ENCODE measurements at regions of chr2 and their contacts with region 1.

Region 1: DNA sequence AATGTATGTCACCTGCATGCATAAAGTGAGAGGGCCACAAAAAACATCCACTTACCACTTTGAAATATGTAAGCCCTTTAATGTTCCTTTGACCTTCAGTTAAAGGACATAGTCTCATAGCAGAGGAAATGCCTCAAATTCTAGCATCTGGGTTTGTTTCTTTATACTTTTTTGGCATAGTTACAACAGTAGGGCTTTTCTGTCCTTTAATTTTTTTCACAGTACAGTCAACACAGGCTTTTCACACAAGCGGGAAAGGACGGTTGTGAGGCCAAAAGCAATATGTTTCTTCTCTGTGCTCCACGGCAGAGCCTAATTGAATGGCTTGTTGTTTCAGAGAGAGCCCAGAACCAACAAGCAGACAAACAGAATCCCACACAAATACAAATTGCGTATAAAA is 57.6 kb downstream of the CRIM1 start:
- DNase-seq: peak; percentile 88
- H3K4me3 ChIP-seq: peak overlapping the region in 1 of 3 experiments; percentile 8
- H3K27ac ChIP-seq: peak overlapping the region; percentile 92
- H3K4me1 ChIP-seq: peaks cover 88% of the 10 kb centered on the region
- H3K27me3 ChIP-seq: no peaks in the 10 kb centered on the region
- CTCF ChIP-seq: no peak
- POLR2A ChIP-seq: peak; percentile 78

Region 2: GRCh38 chr2:36367895-36368353 is 45.3 kb before region 1 on chr2:
- CTCF ChIA-PET with region 1: interaction called, 12 read pairs
- POLR2A ChIA-PET with region 1: interaction called, 4 read pairs
- dilution Hi-C with region 1: no loop called
- intact Hi-C with region 1: loop called (anchors 1 kb)
- DNase-seq: peak; percentile 45
- H3K4me3 ChIP-seq: peak overlapping the region in 1 of 3 experiments; percentile 1
- H3K27ac ChIP-seq: peak overlapping the region; percentile 31
- H3K4me1 ChIP-seq: peaks cover 98% of the 10 kb centered on the region
- H3K27me3 ChIP-seq: no peaks in the 10 kb centered on the region
- CTCF ChIP-seq: no peak
- POLR2A ChIP-seq: no peak

Region 3: DNA sequence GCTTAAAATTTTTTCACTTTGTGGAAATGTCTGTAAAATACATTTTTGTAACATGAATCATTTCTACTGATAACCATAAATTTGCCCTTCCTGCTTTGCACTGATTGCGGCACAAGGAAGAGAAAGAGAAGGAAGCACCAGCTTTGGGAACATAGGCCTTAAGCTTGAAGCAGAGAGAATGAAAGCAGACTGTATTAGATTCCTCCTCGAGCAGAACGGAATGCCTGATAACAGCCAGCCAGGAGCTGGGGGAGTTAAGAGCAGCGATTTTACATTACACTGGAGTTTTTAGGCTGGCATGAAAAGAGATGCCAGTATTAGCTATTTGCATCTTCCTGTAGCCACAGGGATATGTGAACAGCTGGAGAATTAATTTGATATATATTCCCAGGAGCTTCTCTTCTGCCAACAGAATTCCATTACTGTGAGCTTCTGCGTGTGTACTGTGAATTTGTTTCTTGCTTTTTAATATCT is 24.1 kb before region 1 on chr2:
- CTCF ChIA-PET with region 1: interaction called, 17 read pairs
- POLR2A ChIA-PET with region 1: interaction called, 7 read pairs
- dilution Hi-C with region 1: no loop called
- intact Hi-C with region 1: loop called (anchors 1 kb)
- DNase-seq: peak; percentile 87
- H3K4me3 ChIP-seq: no peak overlapping the region
- H3K27ac ChIP-seq: peak overlapping the region; percentile 98
- H3K4me1 ChIP-seq: peaks cover 87% of the 10 kb centered on the region
- H3K27me3 ChIP-seq: no peaks in the 10 kb centered on the region
- CTCF ChIP-seq: no peak
- POLR2A ChIP-seq: no peak

Region 4: GRCh38 chr2:36433311-36434217 is 20.3 kb after region 1 on chr2:
- CTCF ChIA-PET with region 1: interaction called, 10 read pairs
- POLR2A ChIA-PET with region 1: interaction called, 3 read pairs
- dilution Hi-C with region 1: no loop called
- intact Hi-C with region 1: loop called (anchors 2 kb)
- DNase-seq: no peak
- H3K4me3 ChIP-seq: no peak overlapping the region
- H3K27ac ChIP-seq: no peak overlapping the region
- H3K4me1 ChIP-seq: peaks cover 89% of the 10 kb centered on the region
- H3K27me3 ChIP-seq: no peaks in the 10 kb centered on the region
- CTCF ChIP-seq: no peak
- POLR2A ChIP-seq: peak; percentile 4

Region 5: DNA sequence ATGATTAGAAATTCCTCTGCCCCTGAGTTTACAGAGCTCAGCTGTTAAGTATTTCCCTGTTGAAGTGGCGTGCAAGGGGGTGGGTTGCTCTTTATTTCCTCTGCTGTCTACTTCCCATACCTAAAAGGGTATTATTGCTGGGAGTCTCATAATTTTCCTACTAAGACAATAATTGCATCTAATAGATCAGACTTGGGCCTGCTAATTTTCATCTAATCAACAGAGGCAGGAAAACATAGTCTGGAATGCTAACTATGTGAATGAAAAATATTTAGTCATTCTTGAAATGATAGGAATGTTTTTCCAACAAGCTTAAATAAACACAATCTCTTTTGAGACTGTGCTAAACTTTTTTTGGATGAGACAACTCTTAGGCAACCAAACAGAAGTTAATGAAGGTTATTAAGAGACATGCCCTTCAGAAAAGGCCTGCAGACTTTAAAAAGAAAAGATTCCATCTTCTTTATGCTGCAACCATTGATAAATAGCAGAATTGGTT is 73.4 kb after region 1 on chr2:
- CTCF ChIA-PET with region 1: no interaction called
- POLR2A ChIA-PET with region 1: interaction called, 3 read pairs
- dilution Hi-C with region 1: no loop called
- intact Hi-C with region 1: loop called (anchors 1 kb)
- DNase-seq: peak; percentile 90
- H3K4me3 ChIP-seq: no peak overlapping the region
- H3K27ac ChIP-seq: peak overlapping the region; percentile 93
- H3K4me1 ChIP-seq: peaks cover 93% of the 10 kb centered on the region
- H3K27me3 ChIP-seq: no peaks in the 10 kb centered on the region
- CTCF ChIP-seq: no peak
- POLR2A ChIP-seq: peak; percentile 43

Region 6: DNA sequence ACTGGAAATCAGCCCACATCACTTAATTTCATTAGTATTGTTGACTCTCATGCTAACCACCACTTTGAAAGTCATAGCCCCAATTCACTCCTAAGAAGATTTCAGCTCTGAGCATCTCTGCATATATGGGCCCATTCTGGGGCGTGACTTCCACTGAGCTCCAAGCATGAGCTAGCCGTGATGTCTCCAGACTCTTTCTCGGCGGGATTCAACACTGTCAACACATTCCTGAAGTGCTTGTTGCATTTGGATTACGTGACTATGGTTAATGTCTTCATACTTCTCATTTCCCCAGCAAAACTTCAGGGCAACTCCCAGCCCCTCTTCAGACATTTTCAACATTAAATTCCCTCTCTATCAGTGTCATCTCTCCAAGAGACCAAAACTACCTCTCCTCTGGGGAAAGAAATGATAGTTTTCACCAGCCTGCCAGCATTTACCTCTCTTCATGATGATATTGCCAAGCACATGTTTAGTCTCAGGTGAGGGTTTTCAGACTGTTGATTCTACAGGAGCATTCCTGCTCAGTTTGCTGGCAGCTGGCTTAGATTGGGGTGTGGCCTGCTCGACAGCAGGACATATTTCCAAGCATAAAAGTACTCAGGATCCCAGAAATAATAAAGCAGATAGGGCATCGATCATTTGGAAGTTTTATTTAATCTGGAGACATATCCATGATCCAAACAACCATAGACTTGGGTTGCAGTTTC is 103.1 kb after region 1 on chr2:
- CTCF ChIA-PET with region 1: no interaction called
- POLR2A ChIA-PET with region 1: no interaction called
- dilution Hi-C with region 1: no loop called
- intact Hi-C with region 1: no loop called
- DNase-seq: no peak
- H3K4me3 ChIP-seq: no peak overlapping the region
- H3K27ac ChIP-seq: no peak overlapping the region
- H3K4me1 ChIP-seq: no peaks in the 10 kb centered on the region
- H3K27me3 ChIP-seq: no peaks in the 10 kb centered on the region
- CTCF ChIP-seq: no peak
- POLR2A ChIP-seq: no peak

Region 7: DNA sequence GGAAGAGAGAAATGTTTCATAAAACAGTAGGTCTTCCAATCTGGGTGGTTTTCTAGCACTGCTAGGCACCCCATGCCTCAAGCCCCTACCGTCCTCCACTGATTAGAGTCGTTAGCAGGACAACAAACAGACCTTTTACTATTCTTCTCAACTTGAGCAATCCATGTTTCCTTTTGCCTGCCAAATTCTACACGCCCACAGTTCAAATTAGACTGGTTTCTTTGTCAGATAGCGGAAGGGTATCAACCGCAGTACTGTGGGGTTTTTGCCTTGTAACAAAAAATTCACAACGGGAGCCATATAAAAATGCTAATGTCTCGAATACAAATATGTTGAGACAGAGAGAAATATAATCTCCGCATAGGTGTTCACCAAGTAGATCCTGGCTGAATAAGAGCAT is 343.2 kb after region 1 on chr2:
- CTCF ChIA-PET with region 1: no interaction called
- POLR2A ChIA-PET with region 1: no interaction called
- dilution Hi-C with region 1: no loop called
- intact Hi-C with region 1: no loop called
- DNase-seq: no peak
- H3K4me3 ChIP-seq: no peak overlapping the region
- H3K27ac ChIP-seq: no peak overlapping the region
- H3K4me1 ChIP-seq: peaks cover 6% of the 10 kb centered on the region
- H3K27me3 ChIP-seq: no peaks in the 10 kb centered on the region
- CTCF ChIP-seq: no peak
- POLR2A ChIP-seq: no peak

Measured in endothelial cell of umbilical vein (primary cell).